WTC11 (cell line): ENCODE measurements at regions of chr4 and their contacts with region 1.

Region 1: GRCh38 chr4:67122029-67122428 is 423.3 kb downstream of the CENPC start:
- DNase-seq: no peak
- ATAC-seq: peak; percentile 89
- H3K4me3 Mint-ChIP-seq: no peak overlapping the region
- H3K27ac Mint-ChIP-seq: no peak overlapping the region
- H3K4me1 Mint-ChIP-seq: 0 out of 2 replicates have a peak, but pooled peaks cover 2% of the 10 kb centered on the region
- H3K27me3 Mint-ChIP-seq: no peaks in the 10 kb centered on the region
- CTCF ChIP-seq: peak; percentile 41

Region 2: DNA sequence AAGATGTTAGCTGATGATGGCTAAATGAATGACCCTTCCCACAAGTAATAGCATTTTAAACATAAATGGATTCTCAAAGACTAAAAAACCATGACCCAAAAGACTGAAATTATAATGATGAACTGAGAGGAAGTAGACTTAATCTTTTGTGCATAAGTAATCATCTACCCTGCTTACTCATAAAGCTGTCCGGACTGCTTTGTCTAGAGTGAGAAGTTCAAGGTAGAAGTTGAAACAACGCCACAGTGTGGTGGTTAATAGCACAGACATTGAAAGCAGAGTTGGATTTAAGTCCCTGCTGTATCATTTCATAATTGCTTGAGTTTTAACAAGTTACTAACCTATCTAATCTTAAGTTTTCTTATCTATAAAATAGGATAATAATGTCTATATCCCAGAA is 76.7 kb after region 1 on chr4:
- CTCF ChIA-PET with region 1: interaction called, 11 read pairs
- POLR2A ChIA-PET with region 1: no interaction called
- DNase-seq: no peak
- ATAC-seq: peak; percentile 83
- H3K4me3 Mint-ChIP-seq: no peak overlapping the region
- H3K27ac Mint-ChIP-seq: no peak overlapping the region
- H3K4me1 Mint-ChIP-seq: peaks cover 8% of the 10 kb centered on the region
- H3K27me3 Mint-ChIP-seq: no peaks in the 10 kb centered on the region
- CTCF ChIP-seq: peak; percentile 20; the same call in 1 of the 2 replicates